SK-N-SH (cell line): ENCODE measurements at regions of chr19 and their contacts with region 1.

Region 1: DNA sequence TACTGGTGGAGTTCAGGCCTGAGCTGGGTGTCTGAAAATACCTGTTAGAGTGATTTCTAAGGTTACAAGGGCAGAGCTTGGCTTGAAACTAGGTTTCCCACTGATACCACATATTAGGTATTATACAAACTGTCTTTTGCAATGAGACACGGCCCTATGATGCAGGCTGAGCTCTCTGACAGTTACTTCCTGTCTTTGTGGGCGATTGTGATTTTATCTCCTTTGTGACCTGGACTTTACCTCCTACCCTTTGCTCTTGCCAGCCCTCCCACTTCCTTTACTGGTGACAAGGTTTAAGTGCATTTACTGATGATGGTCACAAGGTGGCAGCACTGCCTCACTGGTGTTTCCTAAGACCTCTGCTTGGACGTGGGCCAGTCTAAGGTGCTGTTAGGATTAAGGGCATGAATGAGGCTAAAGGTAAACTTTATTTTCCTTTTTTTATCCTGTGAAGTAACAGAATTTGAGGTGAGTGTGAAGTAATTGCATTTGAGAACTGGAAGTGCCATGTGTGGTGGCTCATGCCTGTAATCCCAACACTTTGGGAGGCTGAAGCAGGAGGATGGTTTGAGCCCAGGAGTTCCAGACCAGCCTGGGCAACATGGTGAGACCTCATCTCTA is 7.7 kb upstream of the CXCL17 start:
- DNase-seq: peak; percentile 75
- H3K4me3 ChIP-seq: no peak overlapping the region; a peak in 1 of 4 replicates
- H3K27ac ChIP-seq: no peak overlapping the region
- H3K4me1 ChIP-seq: peaks cover 0 to 3% of the 10 kb centered on the region in 2 experiments; a peak in 2 of 4 replicates
- H3K27me3 ChIP-seq: no peaks in the 10 kb centered on the region; the same call in 1 of the 2 replicates
- CTCF ChIP-seq: peak; percentile 93
- EP300 ChIP-seq: no peak
- RAD21 ChIP-seq: peak; percentile 96

Region 2: GRCh38 chr19:42176990-42177685 is 273.3 kb before region 1 on chr19:
- CTCF ChIA-PET with region 1: no interaction called
- POLR2A ChIA-PET with region 1: no interaction called
- DNase-seq: peak; percentile 91
- H3K4me3 ChIP-seq: peak overlapping the region; percentile 52 to 78
- H3K27ac ChIP-seq: peak overlapping the region in 1 of 2 experiments; percentile 41; a peak in 1 of 4 replicates
- H3K4me1 ChIP-seq: peaks cover 0 to 11% of the 10 kb centered on the region in 2 experiments; a peak in 1 of 4 replicates
- H3K27me3 ChIP-seq: peaks cover 37% of the 10 kb centered on the region
- CTCF ChIP-seq: peak; percentile 36
- EP300 ChIP-seq: no peak
- RAD21 ChIP-seq: no peak

Region 3: DNA sequence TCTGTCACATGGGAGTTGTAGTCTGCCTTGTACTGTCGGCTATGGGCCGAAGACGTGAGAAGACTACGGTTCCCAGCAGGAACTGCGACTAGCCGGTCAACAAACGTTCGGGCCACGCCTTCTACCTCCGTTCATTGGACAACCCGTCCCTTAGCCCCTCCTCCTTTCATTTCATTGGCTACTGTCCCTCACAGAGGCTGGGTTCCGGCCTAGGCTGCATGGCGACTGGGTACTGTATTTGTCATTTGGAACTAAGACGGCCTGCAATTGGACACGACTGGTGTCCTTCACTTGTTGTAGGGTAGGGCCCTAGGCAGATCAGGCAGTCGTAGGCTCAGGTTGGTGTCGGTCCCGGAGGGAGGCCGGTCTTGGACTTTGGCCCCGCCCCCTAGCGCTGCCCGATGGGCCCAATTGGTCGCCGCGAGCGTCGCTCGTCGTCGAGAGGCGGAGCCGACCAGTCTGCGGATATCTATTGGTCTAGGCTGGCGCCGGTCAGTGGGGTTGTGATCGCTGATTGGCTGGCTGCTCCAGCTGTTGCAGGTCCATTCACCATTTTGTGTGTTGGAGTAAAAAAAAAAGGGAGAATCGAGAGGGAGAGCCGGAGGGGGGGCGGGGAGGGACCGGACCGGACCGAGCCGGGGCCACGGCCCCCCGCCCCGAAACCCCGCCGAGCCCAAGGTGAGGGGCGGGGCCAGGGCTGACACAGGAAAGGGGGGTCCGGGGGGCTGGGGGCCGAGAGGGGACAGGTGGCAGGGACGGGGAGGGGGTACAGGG is 181.5 kb before region 1 on chr19 and contains the start of gene CIC:
- CTCF ChIA-PET with region 1: no interaction called
- POLR2A ChIA-PET with region 1: no interaction called
- DNase-seq: peak; percentile 94
- H3K4me3 ChIP-seq: peak within 1 kb of the TSS; percentile 74 to 88
- H3K27ac ChIP-seq: peak within 1 kb of the TSS; percentile 98 to 99
- H3K4me1 ChIP-seq: peaks cover 13 to 29% of the 10 kb centered on the region in 2 experiments; a peak in 3 of 4 replicates
- H3K27me3 ChIP-seq: no peaks in the 10 kb centered on the region
- CTCF ChIP-seq: no peak
- EP300 ChIP-seq: no peak
- RAD21 ChIP-seq: no peak
- polyA plus RNA-seq, gene CIC: 8.6 and 16.9 TPM in 2 replicates

Region 4: GRCh38 chr19:42461700-42462324 is 11.4 kb after region 1 on chr19:
- CTCF ChIA-PET with region 1: interaction called, 14 read pairs
- POLR2A ChIA-PET with region 1: no interaction called
- DNase-seq: no peak
- H3K4me3 ChIP-seq: no peak overlapping the region
- H3K27ac ChIP-seq: no peak overlapping the region
- H3K4me1 ChIP-seq: peaks cover 0 to 2% of the 10 kb centered on the region in 2 experiments; a peak in 1 of 4 replicates
- H3K27me3 ChIP-seq: no peaks in the 10 kb centered on the region
- CTCF ChIP-seq: no peak
- EP300 ChIP-seq: no peak
- RAD21 ChIP-seq: no peak

Region 5: DNA sequence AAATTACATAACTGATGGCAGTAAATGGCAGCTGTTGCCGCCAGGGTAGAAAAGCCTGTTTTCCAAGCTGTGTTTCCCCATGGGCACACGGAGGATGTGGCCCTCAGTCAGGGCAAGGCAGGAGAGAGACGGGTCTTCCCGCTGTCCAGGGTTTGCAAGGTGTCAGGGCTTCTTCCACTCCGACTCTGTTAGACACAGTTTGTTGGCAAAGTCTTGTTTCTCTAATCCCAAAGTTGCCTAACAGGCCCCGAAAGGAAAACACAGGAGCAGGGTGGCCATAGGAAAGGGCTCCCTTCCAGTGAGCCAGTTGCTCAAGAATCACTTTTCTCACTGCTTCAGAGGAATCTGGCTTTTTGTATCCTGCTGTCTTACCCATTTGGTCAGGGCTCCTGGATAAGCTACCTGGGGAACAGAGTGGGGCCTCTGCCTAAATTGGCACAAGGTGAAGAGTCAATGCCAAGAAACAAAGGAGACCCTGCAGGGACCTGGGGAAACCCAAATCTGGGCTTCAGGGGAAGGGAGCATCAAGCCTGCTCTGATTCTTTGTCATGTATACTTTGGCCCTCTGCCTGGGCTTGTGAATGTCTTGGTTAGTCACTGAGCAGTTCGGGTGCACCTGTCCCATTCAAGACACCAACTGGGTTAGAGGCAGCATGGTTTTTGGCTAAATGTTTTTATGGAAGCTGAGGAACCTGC is 21.3 kb after region 1 on chr19:
- CTCF ChIA-PET with region 1: interaction called, 13 read pairs
- POLR2A ChIA-PET with region 1: no interaction called
- DNase-seq: no peak
- H3K4me3 ChIP-seq: no peak overlapping the region
- H3K27ac ChIP-seq: no peak overlapping the region
- H3K4me1 ChIP-seq: peaks cover 0 to 10% of the 10 kb centered on the region in 2 experiments; a peak in 2 of 4 replicates
- H3K27me3 ChIP-seq: no peaks in the 10 kb centered on the region
- CTCF ChIP-seq: no peak
- EP300 ChIP-seq: no peak
- RAD21 ChIP-seq: no peak

Region 6: GRCh38 chr19:42497492-42498168 is 47.2 kb after region 1 on chr19:
- CTCF ChIA-PET with region 1: interaction called, 14 read pairs
- POLR2A ChIA-PET with region 1: no interaction called
- DNase-seq: no peak
- H3K4me3 ChIP-seq: no peak overlapping the region
- H3K27ac ChIP-seq: no peak overlapping the region
- H3K4me1 ChIP-seq: no peaks in the 10 kb centered on the region; a peak in 1 of 4 replicates
- H3K27me3 ChIP-seq: no peaks in the 10 kb centered on the region
- CTCF ChIP-seq: no peak
- EP300 ChIP-seq: no peak
- RAD21 ChIP-seq: no peak

Region 7: GRCh38 chr19:42540071-42540553 is 89.7 kb after region 1 on chr19:
- CTCF ChIA-PET with region 1: interaction called, 13 read pairs
- POLR2A ChIA-PET with region 1: no interaction called
- DNase-seq: no peak
- H3K4me3 ChIP-seq: no peak overlapping the region
- H3K27ac ChIP-seq: no peak overlapping the region
- H3K4me1 ChIP-seq: no peaks in the 10 kb centered on the region
- H3K27me3 ChIP-seq: peaks cover 5% of the 10 kb centered on the region; the same call in 1 of the 2 replicates
- CTCF ChIP-seq: no peak
- EP300 ChIP-seq: no peak
- RAD21 ChIP-seq: no peak